Calu3 (cell line): ENCODE measurements at regions of chr16 and their contacts with region 1.

Region 1: GRCh38 chr16:74577882-74578366 is 29.0 kb downstream of the GLG1 start:
- DNase-seq: no peak
- H3K4me3 Mint-ChIP-seq: no peak overlapping the region
- H3K27ac Mint-ChIP-seq: peak overlapping the region; percentile 50
- H3K4me1 Mint-ChIP-seq: peaks cover 44% of the 10 kb centered on the region
- H3K27me3 Mint-ChIP-seq: no peaks in the 10 kb centered on the region
- CTCF ChIP-seq: no peak

Region 2: DNA sequence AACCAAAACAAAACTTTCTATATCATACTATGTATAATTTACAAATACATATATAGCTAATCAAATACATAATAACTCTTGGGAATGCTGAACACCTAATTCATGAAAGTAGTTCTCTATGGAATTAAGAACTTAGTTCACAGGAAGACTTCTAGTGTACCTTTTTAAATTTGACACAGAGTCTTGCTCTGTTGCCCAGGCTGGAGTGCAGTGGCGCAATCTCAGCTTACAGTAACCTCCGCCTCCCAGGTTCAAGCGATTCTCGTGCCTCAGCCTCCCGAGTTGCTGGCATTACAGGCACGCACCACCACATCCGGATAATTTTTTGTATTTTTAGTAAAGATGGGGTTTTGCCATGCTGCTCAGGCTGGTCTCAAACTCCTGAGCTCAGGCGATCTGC is 64.0 kb after region 1 on chr16:
- CTCF ChIA-PET with region 1: no interaction called
- intact Hi-C with region 1: loop called (anchors 2 kb)
- DNase-seq: no peak
- H3K4me3 Mint-ChIP-seq: no peak overlapping the region
- H3K27ac Mint-ChIP-seq: no peak overlapping the region
- H3K4me1 Mint-ChIP-seq: no peaks in the 10 kb centered on the region
- H3K27me3 Mint-ChIP-seq: no peaks in the 10 kb centered on the region
- CTCF ChIP-seq: no peak